Naive thymus-derived CD4-positive, alpha-beta T cell (primary cell): ENCODE measurements at regions of chr6 and their contacts with region 1.

Region 1: GRCh38 chr6:120384671-120385070 is 949.6 kb downstream of the TBC1D32 start:
- DNase-seq: no peak
- ATAC-seq: no peak
- H3K4me3 ChIP-seq: no peak overlapping the region
- H3K4me3 Mint-ChIP-seq: no peak overlapping the region
- H3K27ac ChIP-seq: no peak overlapping the region
- H3K27ac Mint-ChIP-seq: no peak overlapping the region
- H3K4me1 ChIP-seq: no peaks in the 10 kb centered on the region
- H3K4me1 Mint-ChIP-seq: no peaks in the 10 kb centered on the region
- H3K27me3 ChIP-seq: no peaks in the 10 kb centered on the region
- H3K27me3 Mint-ChIP-seq: no peaks in the 10 kb centered on the region

Region 2: DNA sequence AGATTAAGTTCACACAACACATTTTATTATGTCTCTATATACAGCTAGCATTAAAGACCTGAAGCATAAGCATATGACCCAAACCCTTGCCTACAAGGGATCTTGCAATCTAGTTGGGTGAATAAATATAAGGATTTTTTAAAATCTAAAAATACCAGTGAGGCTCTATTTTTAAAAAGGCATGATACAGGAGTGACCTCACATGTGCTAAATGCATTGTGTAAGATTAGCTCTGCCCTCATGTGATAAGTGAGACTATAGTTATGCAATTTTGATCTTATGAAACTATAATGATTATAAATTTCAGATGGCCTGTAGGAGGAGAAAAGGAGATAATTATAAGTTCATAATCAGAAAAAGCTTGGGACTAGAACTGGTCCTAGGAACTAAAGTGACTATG is 584.1 kb before region 1 on chr6:
- CTCF ChIA-PET with region 1: no interaction called
- POLR2A ChIA-PET with region 1: no interaction called
- intact Hi-C with region 1: no loop called
- DNase-seq: no peak
- ATAC-seq: peak; percentile 37
- H3K4me3 ChIP-seq: no peak overlapping the region
- H3K4me3 Mint-ChIP-seq: no peak overlapping the region
- H3K27ac ChIP-seq: no peak overlapping the region
- H3K27ac Mint-ChIP-seq: no peak overlapping the region
- H3K4me1 ChIP-seq: no peaks in the 10 kb centered on the region
- H3K4me1 Mint-ChIP-seq: no peaks in the 10 kb centered on the region
- H3K27me3 ChIP-seq: no peaks in the 10 kb centered on the region
- H3K27me3 Mint-ChIP-seq: peaks cover 0 to 9% (median 4%) of the 10 kb centered on the region in 5 donors

Region 3: GRCh38 chr6:121557159-121557932 is 1172.7 kb after region 1 on chr6:
- CTCF ChIA-PET with region 1: no interaction called
- POLR2A ChIA-PET with region 1: no interaction called
- intact Hi-C with region 1: loop called in 1 of 2 experiments (anchors 5 kb)
- DNase-seq: no peak
- ATAC-seq: no peak
- H3K4me3 ChIP-seq: no peak overlapping the region
- H3K4me3 Mint-ChIP-seq: no peak overlapping the region
- H3K27ac ChIP-seq: no peak overlapping the region
- H3K27ac Mint-ChIP-seq: no peak overlapping the region
- H3K4me1 ChIP-seq: no peaks in the 10 kb centered on the region
- H3K4me1 Mint-ChIP-seq: no peaks in the 10 kb centered on the region
- H3K27me3 ChIP-seq: no peaks in the 10 kb centered on the region
- H3K27me3 Mint-ChIP-seq: peaks cover 0 to 4% (median 0%) of the 10 kb centered on the region in 5 donors